Posterior vena cava (tissue), 2 donors: ENCODE measurements at regions of chr5 and their contacts with region 1.

Region 1: DNA sequence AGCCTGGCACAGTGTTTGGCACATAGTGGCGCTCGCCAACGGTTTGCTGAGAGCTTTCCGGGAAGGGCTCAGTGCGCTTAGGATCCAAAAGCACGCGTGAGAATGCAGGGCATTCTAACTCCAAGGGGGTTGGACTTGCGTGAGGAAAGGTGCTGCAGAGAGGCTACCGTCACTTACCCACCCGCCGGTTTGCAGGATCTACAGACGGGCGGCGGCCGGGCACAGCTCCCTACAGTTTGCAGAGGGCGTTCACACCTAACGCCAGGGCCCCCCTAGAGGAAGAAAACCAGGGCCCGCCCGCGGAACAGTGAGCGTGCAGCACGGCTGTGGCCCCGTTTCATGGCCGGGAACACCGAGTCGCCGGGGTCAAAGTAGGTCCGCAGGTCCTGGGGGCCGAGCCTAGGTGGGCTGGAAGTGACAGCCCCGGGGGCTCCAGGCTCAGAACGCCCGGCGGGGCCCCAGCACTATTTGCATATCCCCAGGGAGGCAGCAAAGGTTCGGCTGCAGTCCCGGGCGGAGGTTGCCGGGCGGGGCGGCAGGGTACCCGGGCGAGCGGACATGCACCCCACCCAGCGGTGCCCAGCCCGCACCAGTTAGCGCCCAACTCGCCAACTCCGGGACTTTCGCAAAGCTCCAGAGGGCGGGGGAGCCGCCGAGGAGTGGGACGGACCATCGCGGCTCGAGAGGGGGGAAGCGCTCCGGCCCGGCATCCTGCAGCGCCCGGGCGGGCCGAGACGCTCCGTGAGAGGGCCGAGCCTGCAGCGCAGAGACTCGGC is 526 bp upstream of the GALNT10 start:
- DNase-seq: peak; percentile 96

Region 2: DNA sequence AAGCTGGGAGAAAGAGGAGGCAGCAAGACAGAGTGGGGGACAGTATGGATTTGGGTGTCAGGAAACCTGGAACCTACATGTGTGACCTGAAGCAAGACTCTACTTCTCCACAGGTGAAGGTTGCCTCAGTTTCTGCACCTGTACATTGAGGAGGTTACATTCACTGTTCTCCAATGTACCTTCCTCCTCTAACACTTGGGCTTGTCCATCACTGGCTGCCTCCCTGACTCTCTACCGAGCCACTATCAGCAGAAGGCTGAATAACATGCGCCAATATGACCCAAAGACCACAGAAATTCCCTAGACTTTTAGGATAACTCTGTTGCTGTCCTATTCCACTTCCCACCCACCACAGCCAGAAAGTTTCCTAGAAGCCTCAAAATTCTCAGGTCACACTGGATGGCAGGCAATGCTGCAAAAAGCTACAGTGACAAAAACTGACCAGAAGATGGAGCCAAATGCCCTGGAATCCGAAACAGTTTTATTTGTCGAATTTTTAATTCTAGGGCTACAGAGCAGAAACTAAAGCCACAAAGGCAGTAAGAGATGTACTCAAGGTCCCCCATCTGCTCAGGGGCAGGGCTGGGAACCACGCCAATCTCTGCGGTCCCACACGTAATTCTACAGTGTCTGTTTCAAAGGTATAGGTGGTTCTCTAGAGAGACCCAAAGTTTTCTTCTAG is 215.7 kb before region 1 on chr5:
- intact Hi-C with region 1: loop called in 1 of 2 experiments (anchors 10 kb)
- DNase-seq: no peak

Region 3: DNA sequence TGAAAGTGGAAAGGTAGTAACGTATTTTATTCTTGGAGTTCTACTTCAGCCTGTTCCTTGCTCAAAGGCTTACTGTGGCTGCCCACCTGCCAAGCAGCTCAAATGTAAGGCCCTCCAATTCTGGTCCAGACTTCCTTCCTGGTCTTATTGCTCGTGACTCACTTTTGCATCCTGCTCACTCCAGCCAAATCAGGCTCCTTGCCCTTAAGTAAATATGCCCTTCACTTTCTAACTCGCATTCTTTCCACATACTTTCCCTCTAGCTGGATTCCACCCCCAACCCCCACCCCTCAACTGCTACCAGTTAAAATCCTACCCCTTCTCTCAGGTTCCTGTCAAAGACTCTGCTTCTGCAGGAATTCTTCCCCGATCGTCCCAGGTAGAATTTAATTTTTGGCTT is 97.1 kb after region 1 on chr5:
- intact Hi-C with region 1: no loop called
- DNase-seq: no peak